ENCODE measurements at regions of chr17 and their contacts with region 1.

Region 1: DNA sequence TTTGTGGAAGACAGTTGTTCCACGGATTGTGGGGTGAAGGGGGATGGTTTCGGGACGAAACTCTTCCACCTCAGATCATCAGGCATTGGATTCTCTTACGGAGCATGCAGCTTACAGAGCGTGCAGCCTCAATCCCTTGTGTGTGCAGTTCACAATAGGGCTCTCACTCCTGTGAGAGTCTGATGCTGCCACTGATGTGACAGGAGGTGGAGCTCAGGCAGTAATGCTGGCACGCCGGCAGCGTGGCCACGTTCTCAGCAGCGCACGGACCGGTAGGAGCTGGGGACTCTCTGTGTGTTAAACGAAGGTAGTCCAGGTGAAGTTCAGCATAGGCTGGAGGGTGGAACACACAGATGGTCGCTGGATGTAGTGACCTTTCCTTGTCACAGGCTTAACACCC is 37.8 kb downstream of the SEC14L1 start:
- DNase-seq: no peak
- ATAC-seq: no peak
- H3K4me3 ChIP-seq: no peak overlapping the region
- H3K27ac ChIP-seq: no peak overlapping the region
- H3K4me1 ChIP-seq: peaks cover 8% of the 10 kb centered on the region; the same call in 1 of the 2 replicates
- H3K27me3 ChIP-seq: no peaks in the 10 kb centered on the region
- CTCF ChIP-seq: no peak
- POLR2A ChIP-seq: no peak
- RAD21 ChIP-seq: no peak

Region 2: DNA sequence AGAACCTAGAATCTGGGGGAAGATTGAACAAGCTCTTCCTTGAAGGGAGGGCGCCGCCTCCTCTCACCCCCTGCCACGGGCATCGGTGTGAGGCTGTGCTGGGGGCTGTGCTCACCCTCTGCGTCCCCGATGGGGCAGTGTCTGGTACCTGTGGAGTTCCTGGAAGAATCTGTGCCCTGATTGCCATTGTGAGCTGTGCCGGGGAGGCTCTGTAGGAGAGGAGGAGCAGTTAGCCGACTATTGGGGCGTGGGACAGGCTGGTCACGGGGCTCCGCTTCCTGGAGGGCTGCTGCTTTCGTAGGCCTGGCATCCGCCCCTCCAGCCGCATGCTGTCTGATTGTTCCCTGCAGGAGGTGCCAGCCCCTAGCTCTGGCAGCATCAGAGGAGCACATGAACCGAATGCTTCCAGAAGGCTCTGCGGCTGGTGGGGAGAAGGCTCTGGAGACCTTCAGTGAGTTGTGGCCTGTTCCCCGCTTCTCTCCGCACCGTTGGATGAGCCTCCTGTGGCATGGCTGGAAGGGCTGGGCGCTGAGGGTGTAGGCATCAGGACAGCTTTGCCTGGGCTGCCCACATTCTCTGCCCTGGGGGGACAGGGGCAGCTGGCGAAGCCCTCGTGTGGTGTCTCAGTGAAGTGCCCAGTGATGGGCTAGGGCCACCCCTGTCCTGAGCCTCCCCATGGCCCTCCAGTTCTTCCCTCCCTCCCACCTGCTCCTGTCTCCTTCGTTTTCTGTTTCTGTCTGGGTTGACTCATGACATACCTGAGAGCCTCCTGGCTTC is 49.1 kb after region 1 on chr17:
- CTCF ChIA-PET with region 1: no interaction called
- POLR2A ChIA-PET with region 1: no interaction called
- dilution Hi-C with region 1: no loop called
- in situ Hi-C with region 1: loop called (anchors 5 kb)
- intact Hi-C with region 1: no loop called
- DNase-seq: no peak
- ATAC-seq: no peak
- H3K4me3 ChIP-seq: no peak overlapping the region
- H3K27ac ChIP-seq: no peak overlapping the region
- H3K4me1 ChIP-seq: no peaks in the 10 kb centered on the region
- H3K27me3 ChIP-seq: no peaks in the 10 kb centered on the region
- CTCF ChIP-seq: no peak
- POLR2A ChIP-seq: no peak
- RAD21 ChIP-seq: no peak

Measured in IMR-90 (cell line).